ENCODE measurements at regions of chr3 and their contacts with region 1.

Region 1: GRCh38 chr3:40719660-40720287 is 195.0 kb downstream of the ZNF621 start:
- DNase-seq: no peak
- ATAC-seq: no peak
- H3K4me3 ChIP-seq: no peak overlapping the region
- H3K4me3 Mint-ChIP-seq: no peak overlapping the region
- H3K27ac ChIP-seq: no peak overlapping the region
- H3K27ac Mint-ChIP-seq: no peak overlapping the region
- H3K4me1 ChIP-seq: no peaks in the 10 kb centered on the region
- H3K4me1 Mint-ChIP-seq: no peaks in the 10 kb centered on the region
- H3K27me3 ChIP-seq: no peaks in the 10 kb centered on the region
- H3K27me3 Mint-ChIP-seq: peaks cover 7% of the 10 kb centered on the region
- CTCF ChIP-seq: no peak

Region 2: GRCh38 chr3:39234705-39235104 is 1485.1 kb before region 1 on chr3:
- CTCF ChIA-PET with region 1: no interaction called
- POLR2A ChIA-PET with region 1: no interaction called
- intact Hi-C with region 1: loop called in 1 of 2 experiments (anchors 10 kb)
- DNase-seq: peak in 6 of 9 experiments; percentile 22 to 86 (median 38)
- ATAC-seq: peak; percentile 82
- H3K4me3 ChIP-seq: peak overlapping the region in 1 of 2 experiments; percentile 48
- H3K4me3 Mint-ChIP-seq: peak overlapping the region; percentile 24
- H3K27ac ChIP-seq: peak overlapping the region in 1 of 2 experiments; percentile 80
- H3K27ac Mint-ChIP-seq: peak overlapping the region; percentile 19
- H3K4me1 ChIP-seq: peaks cover 8% of the 10 kb centered on the region
- H3K4me1 Mint-ChIP-seq: peaks cover 27% of the 10 kb centered on the region
- H3K27me3 ChIP-seq: no peaks in the 10 kb centered on the region
- H3K27me3 Mint-ChIP-seq: peaks cover 5% of the 10 kb centered on the region
- CTCF ChIP-seq: no peak

Region 3: DNA sequence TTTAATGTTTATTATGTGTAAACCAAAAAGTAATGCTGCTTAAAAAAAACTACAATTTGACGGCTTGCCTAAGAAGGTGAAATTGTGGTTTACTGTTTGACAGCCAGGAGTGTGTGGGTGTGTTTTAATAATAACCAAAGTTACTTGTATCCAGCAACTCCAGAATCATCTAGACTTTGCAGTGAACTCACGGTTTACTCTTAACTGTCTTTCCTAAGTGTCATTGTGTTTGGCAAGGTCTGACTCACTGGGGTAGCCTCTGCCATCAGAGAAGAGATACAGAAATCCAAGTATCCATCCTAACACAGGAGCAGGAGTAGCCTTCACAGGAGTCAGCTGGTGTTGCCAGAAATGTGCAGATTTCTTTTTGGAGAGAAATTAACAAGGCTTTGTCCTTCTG is 630.7 kb after region 1 on chr3:
- CTCF ChIA-PET with region 1: no interaction called
- POLR2A ChIA-PET with region 1: no interaction called
- intact Hi-C with region 1: no loop called
- DNase-seq: no peak
- ATAC-seq: no peak
- H3K4me3 ChIP-seq: no peak overlapping the region
- H3K4me3 Mint-ChIP-seq: no peak overlapping the region
- H3K27ac ChIP-seq: no peak overlapping the region
- H3K27ac Mint-ChIP-seq: no peak overlapping the region
- H3K4me1 ChIP-seq: no peaks in the 10 kb centered on the region
- H3K4me1 Mint-ChIP-seq: no peaks in the 10 kb centered on the region
- H3K27me3 ChIP-seq: no peaks in the 10 kb centered on the region
- H3K27me3 Mint-ChIP-seq: no peaks in the 10 kb centered on the region
- CTCF ChIP-seq: no peak

Measured in CD8-positive, alpha-beta T cell (primary cell).